ENCODE measurements at regions of chr11 and their contacts with region 1.

Region 1: DNA sequence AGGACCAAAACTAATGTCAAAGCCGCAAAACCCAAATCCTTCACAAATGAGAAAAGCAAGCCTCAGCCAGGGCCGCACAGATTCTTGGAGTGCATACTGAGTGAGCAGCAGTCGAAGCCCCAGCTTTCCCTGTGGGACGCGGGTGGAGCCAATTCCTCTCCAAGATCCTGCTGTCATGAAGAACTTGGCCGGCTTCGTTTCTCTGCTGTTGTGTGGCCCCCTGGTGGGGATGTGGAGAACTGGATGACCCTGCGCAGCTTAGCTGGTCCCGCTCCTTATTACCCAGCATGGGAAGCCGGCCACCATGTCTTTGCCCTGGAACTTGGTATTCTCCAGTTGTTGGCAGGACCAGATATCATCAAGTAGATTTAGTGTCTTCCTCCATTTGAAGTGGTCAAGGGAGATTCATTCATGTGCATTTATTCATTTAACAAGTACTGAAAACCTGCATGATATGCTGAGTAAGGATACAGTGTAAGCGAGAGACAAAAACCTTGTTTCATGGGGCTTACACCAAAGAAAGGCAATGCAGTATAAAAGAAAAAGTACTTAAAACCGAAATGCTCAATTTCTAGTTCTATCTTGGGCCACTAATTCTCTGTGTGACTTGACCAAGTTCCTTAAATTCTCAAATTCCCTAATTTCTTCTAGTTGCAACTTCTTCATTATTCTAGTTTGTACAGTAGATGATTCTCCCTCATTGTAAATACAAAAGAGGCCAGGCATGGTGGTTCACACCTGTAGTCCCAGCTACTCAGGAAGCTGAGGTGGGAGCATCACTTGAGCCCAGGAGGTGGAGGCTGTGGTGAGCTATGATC is 56.7 kb upstream of the CRTAM start:
- DNase-seq: peak; percentile 95

Region 2: DNA sequence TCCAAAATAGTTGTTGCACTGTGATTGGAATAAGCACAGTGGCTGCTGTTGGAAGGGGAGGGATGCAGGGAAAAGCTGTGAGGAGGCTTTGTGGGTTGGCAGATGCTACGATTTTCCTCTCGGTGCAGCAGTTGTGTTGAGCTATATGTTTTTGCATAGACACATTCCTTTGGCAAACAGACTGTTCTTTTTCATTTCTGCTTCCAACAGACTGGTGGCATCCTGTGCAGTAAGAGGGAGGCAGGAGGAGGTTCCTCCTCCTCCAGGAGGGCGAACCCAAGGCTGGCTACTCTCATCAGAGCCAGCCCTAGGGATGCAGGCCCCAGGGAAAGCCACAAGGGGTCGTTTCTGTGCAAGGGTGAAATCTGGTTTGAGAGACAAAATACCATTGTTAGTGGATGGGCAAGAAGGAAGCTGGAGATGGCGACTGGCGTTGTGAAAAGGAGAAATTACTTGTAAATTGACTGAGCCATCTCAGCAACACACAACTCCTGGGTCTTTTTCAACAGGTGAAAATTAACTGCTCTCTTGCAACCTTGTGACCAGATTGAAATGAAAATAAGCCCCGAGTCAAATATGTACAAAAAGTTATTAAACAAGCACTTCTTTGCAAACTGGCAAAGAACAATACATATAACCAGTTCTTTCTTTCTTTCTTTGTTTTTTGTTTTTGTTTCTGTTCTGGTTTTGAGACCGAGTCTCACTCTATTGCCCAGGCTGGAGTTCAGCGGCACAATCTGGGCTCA is 152.6 kb before region 1 on chr11:
- intact Hi-C with region 1: loop called (anchors 5 kb)
- DNase-seq: peak; percentile 87

Region 3: GRCh38 chr11:122642472-122642922 is 139.1 kb before region 1 on chr11:
- intact Hi-C with region 1: loop called in 1 of 2 experiments (anchors 5 kb)
- DNase-seq: no peak

Region 4: DNA sequence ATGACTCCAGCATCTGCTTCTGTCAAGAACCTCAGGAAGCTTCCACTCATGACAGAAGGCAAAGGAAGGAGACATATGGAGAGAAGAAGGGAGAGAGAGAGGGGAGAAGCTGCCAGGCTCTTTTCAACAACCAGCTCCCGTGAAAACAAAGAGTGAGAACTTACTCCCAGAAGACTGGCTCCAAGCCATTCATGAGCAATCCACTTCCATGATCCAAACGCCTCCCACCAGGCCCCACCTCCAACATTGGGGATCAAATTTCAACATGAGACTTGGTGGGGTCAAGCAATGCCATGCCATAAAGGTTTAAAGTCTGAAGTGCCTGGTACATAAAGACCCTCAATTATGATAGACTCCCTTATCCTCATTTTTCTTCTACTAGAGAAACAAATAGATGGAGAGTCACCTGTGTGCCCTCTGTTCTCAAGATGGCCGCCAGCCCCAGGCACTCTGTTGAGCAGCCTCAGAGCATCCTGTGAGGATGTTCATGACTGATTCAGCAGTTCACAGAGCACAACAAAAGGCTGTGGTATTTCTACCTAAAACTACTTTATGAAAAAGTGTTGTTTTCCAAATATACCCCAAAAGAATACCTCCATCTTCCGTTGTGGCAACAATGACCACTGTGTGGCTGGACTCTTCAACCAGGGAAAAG is 12.3 kb before region 1 on chr11:
- intact Hi-C with region 1: no loop called
- DNase-seq: no peak

Region 5: GRCh38 chr11:122796128-122796717 is 14.6 kb after region 1 on chr11:
- intact Hi-C with region 1: no loop called
- DNase-seq: no peak